ENCODE measurements at regions of chr1 and their contacts with region 1.

Region 1: GRCh38 chr1:247210376-247211117 is 38.7 kb upstream of the ZNF124 start:
- DNase-seq: peak; percentile 94 to 98 (median 95)
- H3K4me3 ChIP-seq: peak overlapping the region; percentile 83 to 95 (median 83)
- H3K4me3 Mint-ChIP-seq: peak overlapping the region; percentile 90 to 91
- H3K27ac ChIP-seq: peak overlapping the region; percentile 92 to 93
- H3K27ac Mint-ChIP-seq: peak overlapping the region; percentile 90 to 97 (median 96)
- H3K4me1 ChIP-seq: peaks cover 17 to 22% of the 10 kb centered on the region in 2 donors
- H3K4me1 Mint-ChIP-seq: peaks cover 23% of the 10 kb centered on the region
- H3K27me3 ChIP-seq: no peaks in the 10 kb centered on the region
- H3K27me3 Mint-ChIP-seq: no peaks in the 10 kb centered on the region
- CTCF ChIP-seq: no peak

Region 2: DNA sequence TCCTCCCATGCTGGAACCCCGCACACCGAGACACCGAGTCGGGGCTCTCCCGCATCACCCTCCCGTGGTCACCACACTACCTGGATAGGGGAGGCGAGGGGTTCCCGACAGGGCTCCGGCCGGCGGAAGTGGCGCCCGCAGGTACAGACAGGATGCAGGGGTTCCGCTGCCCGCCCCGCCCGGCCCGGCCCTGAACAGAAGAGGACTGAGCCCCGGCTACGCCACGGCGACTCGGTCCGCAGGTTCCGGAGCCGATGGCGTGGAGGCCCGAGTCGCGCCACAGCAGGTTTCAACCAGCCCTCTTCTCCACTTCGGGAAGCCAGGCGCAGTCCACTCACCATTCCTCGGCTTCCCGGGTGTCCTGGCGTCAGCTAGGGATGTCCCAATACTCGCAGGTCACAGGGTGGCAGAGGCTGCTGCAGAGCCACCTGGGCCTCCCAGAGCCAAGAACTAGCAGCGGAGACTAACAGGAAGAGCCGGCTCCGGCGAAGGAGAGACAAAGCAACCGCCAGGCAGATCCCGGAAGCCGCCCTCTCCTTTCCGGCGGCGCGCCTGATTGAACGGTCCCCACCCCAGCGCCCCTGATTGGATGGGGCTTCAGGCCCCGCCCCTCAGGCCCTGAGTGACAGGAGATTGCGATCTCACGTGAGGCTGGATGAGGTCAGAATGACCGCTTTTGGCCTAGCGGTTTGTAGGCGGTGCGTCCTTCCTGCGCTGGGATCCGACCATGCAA is 106.5 kb before region 1 on chr1 and contains the start of gene ZNF669:
- intact Hi-C with region 1: loop called in 1 of 2 experiments (anchors 10 kb)
- DNase-seq: peak; percentile 95 to 98 (median 95)
- H3K4me3 ChIP-seq: peak within 1 kb of the TSS; percentile 67 to 95 (median 78)
- H3K4me3 Mint-ChIP-seq: peak within 1 kb of the TSS; percentile 91 to 96
- H3K27ac ChIP-seq: peak within 1 kb of the TSS; percentile 70 to 87
- H3K27ac Mint-ChIP-seq: peak within 1 kb of the TSS; percentile 81 to 94 (median 92)
- H3K4me1 ChIP-seq: peaks cover 12% of the 10 kb centered on the region in 2 donors
- H3K4me1 Mint-ChIP-seq: peaks cover 14% of the 10 kb centered on the region
- H3K27me3 ChIP-seq: peaks cover 0 to 12% of the 10 kb centered on the region in 2 donors
- H3K27me3 Mint-ChIP-seq: peaks cover 11 to 19% (median 19%) of the 10 kb centered on the region in 3 donors
- CTCF ChIP-seq: no peak
- polyA plus RNA-seq, gene ZNF669: 5.1 to 8.9 (median 8.9) TPM

Region 3: GRCh38 chr1:247165674-247166073 is 44.9 kb before region 1 on chr1:
- intact Hi-C with region 1: loop called in 1 of 2 experiments (anchors 5 kb)
- DNase-seq: no peak
- H3K4me3 ChIP-seq: no peak overlapping the region
- H3K4me3 Mint-ChIP-seq: no peak overlapping the region
- H3K27ac ChIP-seq: no peak overlapping the region
- H3K27ac Mint-ChIP-seq: no peak overlapping the region
- H3K4me1 ChIP-seq: no peaks in the 10 kb centered on the region
- H3K4me1 Mint-ChIP-seq: peaks cover 11% of the 10 kb centered on the region
- H3K27me3 ChIP-seq: no peaks in the 10 kb centered on the region
- H3K27me3 Mint-ChIP-seq: no peaks in the 10 kb centered on the region
- CTCF ChIP-seq: no peak

Region 4: GRCh38 chr1:247576495-247576894 is 365.9 kb after region 1 on chr1:
- intact Hi-C with region 1: loop called in 1 of 2 experiments (anchors 10 kb)
- DNase-seq: peak; percentile 3 to 50 (median 17)
- H3K4me3 ChIP-seq: no peak overlapping the region
- H3K4me3 Mint-ChIP-seq: no peak overlapping the region
- H3K27ac ChIP-seq: no peak overlapping the region
- H3K27ac Mint-ChIP-seq: no peak overlapping the region
- H3K4me1 ChIP-seq: no peaks in the 10 kb centered on the region
- H3K4me1 Mint-ChIP-seq: peaks cover 5% of the 10 kb centered on the region
- H3K27me3 ChIP-seq: no peaks in the 10 kb centered on the region
- H3K27me3 Mint-ChIP-seq: peaks cover 0 to 8% (median 2%) of the 10 kb centered on the region in 3 donors
- CTCF ChIP-seq: peak; percentile 70

Measured in CD14-positive monocyte (primary cell).